Activated CD4-positive, alpha-beta memory T cell treated with anti-CD3 and anti-CD28 coated beads for 36 hours (primary cell): ENCODE measurements at regions of chr5 and their contacts with region 1.

Region 1: DNA sequence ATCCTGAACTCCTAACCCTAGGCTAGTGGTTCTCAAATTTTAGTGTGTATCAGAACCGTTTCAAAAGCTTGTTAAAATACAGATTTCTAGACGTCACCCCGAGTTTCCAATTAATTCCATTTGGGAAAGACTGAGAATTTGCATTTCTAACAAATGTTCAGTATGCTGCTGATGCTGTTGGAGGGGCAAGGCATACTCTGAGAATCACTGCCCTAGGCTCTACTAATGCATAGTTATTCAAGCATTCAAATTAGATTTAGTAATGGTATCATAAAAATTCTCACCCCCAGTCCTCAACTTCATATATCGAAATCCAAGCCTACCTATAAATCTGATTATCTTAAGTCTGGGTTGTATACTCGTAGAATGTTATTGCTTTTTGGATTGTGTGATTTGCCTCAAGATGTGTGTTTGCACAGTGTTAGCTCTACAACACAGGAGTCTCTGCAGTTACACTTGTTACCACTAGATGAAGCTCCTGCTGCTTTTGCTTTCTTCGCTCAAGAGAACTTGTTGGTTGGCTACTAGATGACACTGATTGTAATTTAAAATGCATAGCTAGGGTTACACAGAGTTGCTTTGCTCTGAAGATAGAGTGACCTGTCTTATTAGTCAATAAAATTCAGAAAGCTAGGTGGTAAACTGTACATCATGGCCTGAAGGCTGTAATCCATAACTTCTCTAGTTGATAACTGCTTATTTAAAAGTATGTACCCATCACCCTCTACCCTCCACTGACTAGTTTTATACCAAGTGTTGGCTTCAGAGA is 7.5 kb upstream of the ERAP2 start:
- DNase-seq: no peak
- H3K4me3 Mint-ChIP-seq: no peak overlapping the region
- H3K27ac Mint-ChIP-seq: no peak overlapping the region
- H3K4me1 Mint-ChIP-seq: peaks cover 50% of the 10 kb centered on the region
- H3K27me3 Mint-ChIP-seq: no peaks in the 10 kb centered on the region

Region 2: GRCh38 chr5:96807075-96807654 is 61.6 kb before region 1 on chr5:
- CTCF ChIA-PET with region 1: interaction called, 15 read pairs
- POLR2A ChIA-PET with region 1: interaction called, 32 read pairs
- intact Hi-C with region 1: loop called (anchors 2 kb)
- DNase-seq: peak; percentile 59
- H3K4me3 Mint-ChIP-seq: peak overlapping the region; percentile 94
- H3K27ac Mint-ChIP-seq: peak overlapping the region; percentile 98
- H3K4me1 Mint-ChIP-seq: peaks cover 72% of the 10 kb centered on the region
- H3K27me3 Mint-ChIP-seq: no peaks in the 10 kb centered on the region

Region 3: DNA sequence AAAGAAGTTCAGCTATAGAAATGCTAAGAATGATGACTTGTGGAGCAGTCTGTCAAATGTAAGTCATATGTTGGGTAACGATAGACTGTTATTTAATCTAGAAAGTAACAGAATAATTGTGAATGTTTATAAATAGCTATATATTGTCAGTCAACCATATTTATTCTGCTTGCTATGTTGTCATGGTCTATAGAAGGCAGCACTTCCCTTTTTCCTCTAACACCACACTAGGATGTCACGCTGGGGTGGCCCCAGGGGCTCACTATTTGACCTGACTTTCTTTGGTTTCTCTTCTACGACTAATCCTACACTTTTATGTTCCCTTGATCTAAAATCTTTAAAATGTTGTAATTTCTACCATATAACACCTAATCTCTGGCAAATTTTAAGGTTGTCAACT is 28.0 kb after region 1 on chr5:
- CTCF ChIA-PET with region 1: interaction called, 19 read pairs
- POLR2A ChIA-PET with region 1: interaction called, 3 read pairs
- intact Hi-C with region 1: loop called (anchors 1 kb)
- DNase-seq: peak; percentile 62
- H3K4me3 Mint-ChIP-seq: peak overlapping the region; percentile 79
- H3K27ac Mint-ChIP-seq: peak overlapping the region; percentile 93
- H3K4me1 Mint-ChIP-seq: peaks cover 48% of the 10 kb centered on the region
- H3K27me3 Mint-ChIP-seq: no peaks in the 10 kb centered on the region

Region 4: DNA sequence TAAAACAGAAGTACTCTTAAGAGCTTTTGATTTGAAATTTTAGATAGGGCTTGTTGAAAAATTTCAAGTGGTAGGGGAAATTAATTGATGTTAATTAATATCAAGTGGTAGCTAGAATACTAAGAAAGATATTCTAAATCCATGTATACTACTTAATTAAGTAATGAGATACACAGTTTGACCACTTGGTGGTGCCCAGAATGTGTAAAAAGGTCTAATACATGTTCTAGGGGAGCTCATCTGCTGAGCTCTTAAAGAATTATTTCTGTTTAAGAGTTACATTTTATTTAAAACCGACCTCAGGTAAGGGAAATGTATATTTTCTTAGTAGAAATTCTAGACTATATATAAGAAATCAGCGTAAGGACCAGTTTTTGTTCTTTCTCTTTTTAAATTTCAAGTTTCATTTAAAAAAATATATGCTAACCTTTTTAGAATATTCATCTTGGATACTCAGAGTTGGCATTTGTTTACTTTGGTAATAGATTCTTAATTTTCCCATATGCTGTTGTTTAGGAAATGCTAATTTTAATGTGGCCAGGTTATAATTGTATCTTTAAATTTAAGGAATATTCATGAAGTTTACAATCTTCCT is 128.6 kb after region 1 on chr5:
- CTCF ChIA-PET with region 1: interaction called, 21 read pairs
- POLR2A ChIA-PET with region 1: no interaction called
- intact Hi-C with region 1: no loop called
- DNase-seq: no peak
- H3K4me3 Mint-ChIP-seq: no peak overlapping the region
- H3K27ac Mint-ChIP-seq: no peak overlapping the region
- H3K4me1 Mint-ChIP-seq: peaks cover 13% of the 10 kb centered on the region
- H3K27me3 Mint-ChIP-seq: no peaks in the 10 kb centered on the region

Region 5: GRCh38 chr5:97094579-97095317 is 226.0 kb after region 1 on chr5:
- CTCF ChIA-PET with region 1: no interaction called
- POLR2A ChIA-PET with region 1: no interaction called
- intact Hi-C with region 1: loop called (anchors 2 kb)
- DNase-seq: peak; percentile 56
- H3K4me3 Mint-ChIP-seq: peak overlapping the region; percentile 4
- H3K27ac Mint-ChIP-seq: no peak overlapping the region
- H3K4me1 Mint-ChIP-seq: peaks cover 15% of the 10 kb centered on the region
- H3K27me3 Mint-ChIP-seq: peaks cover 14% of the 10 kb centered on the region